PC-9 (cell line): ENCODE measurements at regions of chr2 and their contacts with region 1.

Region 1: DNA sequence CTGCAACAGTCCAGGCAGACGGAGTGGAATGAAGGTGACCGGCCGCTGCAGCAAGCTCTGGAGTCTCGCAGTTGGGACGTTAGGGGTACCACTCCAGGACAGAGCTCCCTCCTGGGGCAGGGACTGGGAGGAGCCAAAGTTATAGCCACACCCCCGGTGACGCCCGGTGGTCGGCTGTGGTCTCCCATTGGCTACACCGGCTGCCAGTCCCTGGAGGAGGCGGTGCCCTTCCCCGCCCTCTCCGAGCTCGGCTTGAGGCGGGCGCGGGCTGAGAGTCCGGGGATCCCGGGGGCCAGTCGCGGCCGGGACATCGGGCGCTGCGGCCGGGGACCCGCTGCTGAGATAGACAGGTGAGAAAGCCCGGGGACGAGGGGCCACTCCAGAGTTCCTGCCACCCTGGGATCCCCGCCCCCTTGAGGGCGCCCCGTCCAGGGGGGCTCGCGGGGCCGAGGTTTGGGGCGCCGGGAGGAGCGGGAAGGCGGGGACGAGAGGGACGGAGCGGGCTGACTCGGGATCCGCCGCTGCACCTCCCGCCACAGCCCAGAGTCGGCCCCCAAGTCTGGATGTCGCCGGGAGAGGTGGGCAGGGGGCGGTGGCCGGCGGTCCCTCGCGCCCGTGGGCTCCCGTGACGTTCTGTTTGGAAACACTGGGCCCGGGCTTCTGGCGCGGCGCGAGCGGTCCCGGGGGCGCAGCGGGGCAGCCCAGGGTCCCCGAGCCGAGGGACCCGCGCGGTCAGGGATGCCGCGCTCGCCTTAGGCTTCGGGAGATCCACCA is at the start of gene PLEKHH2:
- DNase-seq: peak; percentile 70 to 95
- H3K4me3 ChIP-seq: peak within 1 kb of the TSS; percentile 68
- H3K27ac ChIP-seq: no peak within 1 kb of the TSS
- H3K4me1 ChIP-seq: peaks cover 25% of the 10 kb centered on the region
- H3K27me3 ChIP-seq: peaks cover 7% of the 10 kb centered on the region; the same call in 1 of the 2 replicates
- CTCF ChIP-seq: no peak
- total RNA-seq, gene PLEKHH2: 1.6 and 2.3 TPM in 2 replicates

Region 2: DNA sequence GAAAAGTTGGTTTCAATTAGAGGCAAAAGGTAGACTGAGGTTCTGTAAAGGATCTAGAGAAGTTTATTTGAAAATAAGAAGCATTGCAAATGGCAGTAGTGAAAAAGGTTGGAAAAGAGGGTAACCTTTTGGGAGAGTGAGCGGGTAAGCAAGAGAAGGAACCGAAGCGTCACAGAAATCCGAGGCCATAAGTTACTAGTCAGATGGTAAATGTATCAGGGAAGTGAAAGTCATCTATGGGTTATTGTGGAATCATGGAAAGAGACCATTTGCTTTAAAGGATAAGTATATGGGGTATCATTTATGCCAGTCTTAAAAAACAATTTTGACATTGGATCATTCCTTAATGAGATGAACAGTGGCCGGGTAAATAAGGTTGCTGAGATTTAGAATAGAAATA is 1437.6 kb before region 1 on chr2:
- CTCF ChIA-PET with region 1: no interaction called
- POLR2A ChIA-PET with region 1: no interaction called
- intact Hi-C with region 1: no loop called
- DNase-seq: no peak
- H3K4me3 ChIP-seq: no peak overlapping the region
- H3K27ac ChIP-seq: no peak overlapping the region
- H3K4me1 ChIP-seq: peaks cover 13% of the 10 kb centered on the region
- H3K27me3 ChIP-seq: no peaks in the 10 kb centered on the region
- CTCF ChIP-seq: no peak

Region 3: DNA sequence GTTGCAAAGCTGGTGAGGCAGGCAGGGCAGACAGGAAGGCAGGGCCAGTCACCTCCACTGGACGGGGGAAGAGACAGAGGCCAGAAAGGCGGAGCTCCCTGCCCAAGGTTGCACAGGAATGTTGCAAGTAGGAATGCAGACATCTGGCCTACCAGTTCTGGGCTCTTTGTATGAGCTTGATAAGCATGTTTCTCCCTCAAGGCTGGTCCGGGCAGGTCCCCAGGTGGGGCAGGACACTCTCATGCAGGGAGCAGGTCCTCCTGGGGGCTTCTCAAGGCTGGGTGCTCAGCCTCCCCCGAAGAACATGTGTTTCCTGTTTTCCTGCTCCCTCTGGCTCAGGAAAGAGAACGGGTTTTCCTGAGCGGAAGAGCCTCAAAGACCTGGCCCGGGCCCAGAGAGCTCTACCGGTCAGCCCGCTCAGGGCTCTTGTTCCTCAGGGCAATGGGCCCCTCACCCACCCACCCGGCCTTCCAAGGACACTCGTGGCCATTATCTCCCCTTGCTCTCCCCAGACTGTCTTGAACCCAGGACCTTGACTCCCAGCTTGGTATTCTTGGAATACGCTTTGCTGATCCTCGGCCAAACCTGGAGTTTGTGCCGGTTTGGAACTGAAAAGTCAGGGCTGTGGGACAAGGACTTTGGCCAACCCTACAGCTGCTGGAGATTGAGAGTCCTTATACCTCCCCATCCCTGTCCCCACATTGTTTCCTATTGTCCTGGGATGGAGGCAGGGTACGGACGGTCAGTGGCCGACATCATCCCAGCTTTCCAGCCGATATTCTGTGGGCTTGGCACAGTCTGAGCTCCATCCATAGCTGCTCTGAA is 757.1 kb before region 1 on chr2:
- CTCF ChIA-PET with region 1: interaction called, 18 read pairs
- POLR2A ChIA-PET with region 1: no interaction called
- intact Hi-C with region 1: no loop called
- DNase-seq: peak in 1 of 2 experiments; percentile 10
- H3K4me3 ChIP-seq: no peak overlapping the region
- H3K27ac ChIP-seq: no peak overlapping the region
- H3K4me1 ChIP-seq: no peaks in the 10 kb centered on the region
- H3K27me3 ChIP-seq: no peaks in the 10 kb centered on the region
- CTCF ChIP-seq: no peak

Region 4: GRCh38 chr2:43559391-43560230 is 77.6 kb before region 1 on chr2:
- CTCF ChIA-PET with region 1: no interaction called
- POLR2A ChIA-PET with region 1: no interaction called
- intact Hi-C with region 1: no loop called
- DNase-seq: no peak
- H3K4me3 ChIP-seq: no peak overlapping the region
- H3K27ac ChIP-seq: no peak overlapping the region
- H3K4me1 ChIP-seq: no peaks in the 10 kb centered on the region
- H3K27me3 ChIP-seq: no peaks in the 10 kb centered on the region
- CTCF ChIP-seq: no peak

Region 5: DNA sequence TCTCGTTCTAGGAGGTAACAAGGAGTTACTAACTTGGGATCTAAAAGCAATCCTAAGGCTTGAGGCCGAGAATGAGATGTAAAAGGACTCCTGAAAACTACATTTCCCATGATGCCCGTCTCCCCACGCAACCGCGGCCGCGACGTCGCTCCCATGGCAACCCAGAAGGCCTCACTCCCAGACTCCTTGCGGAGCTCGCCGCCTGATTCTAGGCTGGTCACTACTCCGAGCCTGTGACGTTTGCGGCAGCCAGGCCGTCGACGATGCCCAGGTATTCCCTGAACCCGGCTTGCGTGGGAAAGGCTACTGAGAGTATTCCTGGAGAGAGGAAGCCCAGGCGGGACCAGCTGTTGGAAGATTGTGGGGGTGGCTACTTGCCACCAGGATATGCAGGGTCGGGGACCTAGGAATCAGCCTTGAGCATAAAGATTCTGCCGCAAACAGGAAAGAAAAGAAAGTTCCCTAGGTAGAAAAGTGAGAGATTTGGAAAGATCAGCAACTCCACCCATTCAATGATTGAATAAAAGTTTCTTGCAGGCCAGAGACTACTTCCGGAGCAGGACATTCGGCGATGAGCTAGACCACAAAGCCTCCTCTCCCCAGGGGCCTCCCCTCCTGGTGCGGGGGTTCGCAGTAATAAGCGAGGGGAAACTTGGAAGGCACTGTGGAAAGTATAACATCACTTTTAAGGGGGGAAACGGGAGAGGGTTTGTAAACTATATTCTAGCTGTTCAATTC is 136.8 kb after region 1 on chr2 and contains the start of gene DYNC2LI1:
- CTCF ChIA-PET with region 1: no interaction called
- POLR2A ChIA-PET with region 1: no interaction called
- intact Hi-C with region 1: loop called (anchors 1 kb)
- DNase-seq: peak; percentile 92 to 93
- H3K4me3 ChIP-seq: peak within 1 kb of the TSS; percentile 61
- H3K27ac ChIP-seq: peak within 1 kb of the TSS; percentile 61
- H3K4me1 ChIP-seq: peaks cover 8% of the 10 kb centered on the region; the same call in 1 of the 2 replicates
- H3K27me3 ChIP-seq: no peaks in the 10 kb centered on the region
- CTCF ChIP-seq: no peak
- total RNA-seq, gene DYNC2LI1: 26.5 and 27.1 TPM in 2 replicates